ENCODE measurements at regions of chr1 and their contacts with region 1.

Region 1: GRCh38 chr1:26306290-26307229 is at the start of gene UBXN11:
- DNase-seq: peak; percentile 92
- H3K4me3 Mint-ChIP-seq: peak within 1 kb of the TSS; percentile 99
- H3K27ac Mint-ChIP-seq: peak within 1 kb of the TSS; percentile 95
- H3K4me1 Mint-ChIP-seq: peaks cover 41% of the 10 kb centered on the region
- H3K27me3 Mint-ChIP-seq: no peaks in the 10 kb centered on the region
- total RNA-seq, gene UBXN11: 14.8 and 22.1 TPM in 2 replicates

Region 2: GRCh38 chr1:26284597-26285360 is 21.8 kb before region 1 on chr1:
- intact Hi-C with region 1: loop called (anchors 1 kb)
- DNase-seq: peak; percentile 88
- H3K4me3 Mint-ChIP-seq: peak overlapping the region; percentile 81
- H3K27ac Mint-ChIP-seq: peak overlapping the region; percentile 97
- H3K4me1 Mint-ChIP-seq: peaks cover 70% of the 10 kb centered on the region
- H3K27me3 Mint-ChIP-seq: no peaks in the 10 kb centered on the region

Region 3: GRCh38 chr1:26900001-26900814 is 593.6 kb after region 1 on chr1 and contains the start of gene GPATCH3:
- intact Hi-C with region 1: loop called (anchors 5 kb)
- DNase-seq: peak; percentile 81
- H3K4me3 Mint-ChIP-seq: peak within 1 kb of the TSS; percentile 93
- H3K27ac Mint-ChIP-seq: peak within 1 kb of the TSS; percentile 96
- H3K4me1 Mint-ChIP-seq: peaks cover 27% of the 10 kb centered on the region
- H3K27me3 Mint-ChIP-seq: peaks cover 2% of the 10 kb centered on the region
- total RNA-seq, gene GPATCH3: 15.6 and 15.7 TPM in 2 replicates